ENCODE measurements at regions of chr21 and their contacts with region 1.

Region 1: DNA sequence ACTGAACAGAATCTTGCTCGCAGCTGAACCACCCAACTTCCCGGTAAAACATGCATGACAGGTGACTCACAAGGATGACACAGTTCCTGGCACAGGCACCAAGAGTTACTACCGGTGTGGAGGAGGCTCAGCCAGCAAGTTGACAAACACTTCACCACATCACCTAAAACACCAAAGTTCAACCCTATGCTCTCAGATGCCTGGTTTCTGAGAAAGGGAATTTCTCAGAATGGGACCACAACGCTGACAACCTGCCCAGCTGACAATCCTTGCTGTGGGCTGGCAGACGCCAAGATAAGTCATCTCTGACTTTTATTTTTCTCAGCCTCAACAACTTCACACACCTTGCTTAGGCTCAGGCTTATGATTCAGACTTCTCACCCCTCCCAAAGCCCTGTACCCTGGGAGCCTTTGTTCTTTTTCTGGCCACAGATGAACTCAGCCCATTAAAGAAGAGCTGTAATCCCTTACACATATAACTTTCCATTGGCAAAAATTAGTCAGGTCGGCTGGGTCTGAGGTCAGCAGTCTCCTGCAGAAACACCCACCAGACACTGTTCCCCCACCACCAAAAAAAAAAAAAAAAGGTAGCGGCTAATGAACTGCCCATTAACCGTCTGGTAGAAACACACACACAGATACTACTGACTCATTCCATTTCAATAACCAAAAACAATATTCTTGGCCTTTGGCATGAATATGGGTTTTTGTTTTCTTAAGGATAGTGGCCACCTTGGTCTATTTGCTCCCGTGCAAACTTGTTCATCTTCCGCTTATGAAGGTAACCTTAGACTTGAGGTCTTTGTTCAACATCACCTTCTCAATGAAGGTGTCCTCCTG is 10.8 kb upstream of the TIAM1 start:
- DNase-seq: peak; percentile 37 to 92 (median 72)
- ATAC-seq: peak; percentile 88
- H3K4me3 ChIP-seq: no peak overlapping the region
- H3K4me3 Mint-ChIP-seq: peak overlapping the region; percentile 21
- H3K27ac ChIP-seq: peak overlapping the region in 1 of 2 donors; percentile 54
- H3K27ac Mint-ChIP-seq: peak overlapping the region; percentile 72
- H3K4me1 ChIP-seq: peaks cover 37% of the 10 kb centered on the region
- H3K4me1 Mint-ChIP-seq: peaks cover 42% of the 10 kb centered on the region
- H3K27me3 ChIP-seq: no peaks in the 10 kb centered on the region
- H3K27me3 Mint-ChIP-seq: no peaks in the 10 kb centered on the region
- CTCF ChIP-seq: no peak

Region 2: GRCh38 chr21:31310750-31311149 is 44.1 kb before region 1 on chr21:
- CTCF ChIA-PET with region 1: no interaction called
- POLR2A ChIA-PET with region 1: no interaction called
- intact Hi-C with region 1: no loop called
- DNase-seq: no peak
- ATAC-seq: no peak
- H3K4me3 ChIP-seq: no peak overlapping the region
- H3K4me3 Mint-ChIP-seq: no peak overlapping the region
- H3K27ac ChIP-seq: no peak overlapping the region
- H3K27ac Mint-ChIP-seq: no peak overlapping the region
- H3K4me1 ChIP-seq: no peaks in the 10 kb centered on the region
- H3K4me1 Mint-ChIP-seq: no peaks in the 10 kb centered on the region
- H3K27me3 ChIP-seq: no peaks in the 10 kb centered on the region
- H3K27me3 Mint-ChIP-seq: no peaks in the 10 kb centered on the region
- CTCF ChIP-seq: no peak

Region 3: DNA sequence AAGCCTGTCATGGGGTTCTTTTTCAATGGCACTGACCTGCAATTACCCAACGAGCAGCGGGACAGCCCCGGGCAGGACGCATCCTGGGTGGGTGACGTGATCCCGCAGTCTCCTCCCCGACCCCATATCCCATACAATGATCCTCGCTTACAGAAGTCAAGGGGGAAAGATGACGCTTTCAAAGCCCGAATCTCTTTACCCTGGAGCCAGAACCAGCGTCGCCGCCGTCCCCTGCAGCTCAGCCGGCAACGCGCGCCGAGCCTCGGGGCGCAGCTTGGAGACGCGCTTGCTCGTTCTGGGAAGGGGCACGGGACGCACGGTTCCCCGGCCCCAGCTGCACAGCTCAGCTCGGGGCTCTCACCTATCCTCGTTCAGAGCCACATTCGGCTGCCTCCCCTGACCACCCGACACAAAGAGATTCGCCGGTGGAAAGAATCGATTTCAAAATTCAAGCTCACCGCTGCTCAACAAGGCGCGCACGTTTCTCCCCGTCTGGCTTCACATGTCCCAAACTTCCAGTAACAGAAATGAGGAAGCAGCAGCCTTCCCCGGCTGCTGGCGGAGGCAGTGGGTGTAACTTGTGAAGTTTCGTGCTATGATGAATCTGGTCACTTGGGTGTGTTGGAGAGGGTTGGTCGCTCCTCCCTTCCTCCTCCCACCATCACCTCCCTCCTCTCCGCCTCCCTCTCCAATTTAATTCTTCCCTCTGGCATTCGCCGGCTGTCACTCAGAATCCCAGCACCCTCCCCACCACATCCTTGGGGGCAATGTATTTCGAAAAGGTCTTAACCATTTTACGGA is 10.9 kb before region 1 on chr21 and contains the start of gene TIAM1:
- CTCF ChIA-PET with region 1: no interaction called
- POLR2A ChIA-PET with region 1: interaction called, 12 read pairs
- intact Hi-C with region 1: no loop called
- DNase-seq: peak in 4 of 14 experiments; percentile 20 to 62 (median 38)
- ATAC-seq: no peak
- H3K4me3 ChIP-seq: peak within 1 kb of the TSS; percentile 64
- H3K4me3 Mint-ChIP-seq: peak within 1 kb of the TSS; percentile 91
- H3K27ac ChIP-seq: no peak within 1 kb of the TSS
- H3K27ac Mint-ChIP-seq: no peak within 1 kb of the TSS
- H3K4me1 ChIP-seq: peaks cover 21% of the 10 kb centered on the region
- H3K4me1 Mint-ChIP-seq: peaks cover 44% of the 10 kb centered on the region
- H3K27me3 ChIP-seq: peaks cover 16 to 22% of the 10 kb centered on the region in 2 experiments
- H3K27me3 Mint-ChIP-seq: peaks cover 56% of the 10 kb centered on the region
- CTCF ChIP-seq: no peak
- total RNA-seq, gene TIAM1: 39.6 to 39.8 TPM

Region 4: GRCh38 chr21:31397515-31397926 is 42.7 kb after region 1 on chr21:
- CTCF ChIA-PET with region 1: no interaction called
- POLR2A ChIA-PET with region 1: interaction called, 3 read pairs
- intact Hi-C with region 1: loop called in 1 of 2 experiments (anchors 5 kb)
- DNase-seq: no peak
- ATAC-seq: peak; percentile 8
- H3K4me3 ChIP-seq: no peak overlapping the region
- H3K4me3 Mint-ChIP-seq: peak overlapping the region; percentile 70
- H3K27ac ChIP-seq: no peak overlapping the region
- H3K27ac Mint-ChIP-seq: peak overlapping the region; percentile 90
- H3K4me1 ChIP-seq: peaks cover 36% of the 10 kb centered on the region
- H3K4me1 Mint-ChIP-seq: peaks cover 58% of the 10 kb centered on the region
- H3K27me3 ChIP-seq: no peaks in the 10 kb centered on the region
- H3K27me3 Mint-ChIP-seq: no peaks in the 10 kb centered on the region
- CTCF ChIP-seq: no peak

Region 5: DNA sequence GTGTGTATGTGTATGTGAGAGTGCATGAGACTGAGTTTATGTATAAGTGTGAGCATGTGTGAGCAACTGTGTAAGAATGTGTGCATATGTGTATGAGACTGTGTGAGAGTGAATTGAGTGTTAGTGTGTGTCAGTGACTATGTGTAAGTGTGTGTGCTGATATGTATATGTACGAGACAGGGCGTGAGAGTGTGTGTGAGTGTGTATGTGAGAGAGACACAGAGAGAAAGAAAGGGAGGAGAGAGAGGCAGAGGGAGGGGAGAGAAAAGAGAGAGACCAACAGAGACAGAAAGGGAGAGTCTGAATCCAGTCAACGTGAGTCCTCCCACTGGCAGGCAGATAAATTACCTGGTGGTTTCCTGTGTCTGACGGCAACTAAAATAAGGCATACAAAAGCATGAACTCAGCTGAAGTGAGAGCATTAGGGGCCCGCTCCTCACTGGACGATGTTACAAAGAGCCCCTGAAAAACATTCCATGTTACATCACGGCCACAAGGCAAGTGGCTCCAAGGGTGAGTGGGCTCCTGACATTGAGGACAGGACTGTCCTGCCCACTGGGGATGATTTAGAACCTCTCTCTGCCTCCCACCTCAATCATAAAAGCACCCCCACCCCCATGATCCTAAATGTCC is 55.8 kb after region 1 on chr21:
- CTCF ChIA-PET with region 1: no interaction called
- POLR2A ChIA-PET with region 1: no interaction called
- intact Hi-C with region 1: no loop called
- DNase-seq: peak in 7 of 14 experiments; percentile 9 to 48 (median 39)
- ATAC-seq: peak; percentile 80
- H3K4me3 ChIP-seq: no peak overlapping the region
- H3K4me3 Mint-ChIP-seq: no peak overlapping the region
- H3K27ac ChIP-seq: no peak overlapping the region
- H3K27ac Mint-ChIP-seq: no peak overlapping the region
- H3K4me1 ChIP-seq: peaks cover 9% of the 10 kb centered on the region
- H3K4me1 Mint-ChIP-seq: peaks cover 13% of the 10 kb centered on the region
- H3K27me3 ChIP-seq: no peaks in the 10 kb centered on the region
- H3K27me3 Mint-ChIP-seq: no peaks in the 10 kb centered on the region
- CTCF ChIP-seq: no peak

Region 6: GRCh38 chr21:31509194-31510017 is 154.6 kb after region 1 on chr21:
- CTCF ChIA-PET with region 1: no interaction called
- POLR2A ChIA-PET with region 1: no interaction called
- intact Hi-C with region 1: loop called in 1 of 2 experiments (anchors 5 kb)
- DNase-seq: peak; percentile 45 to 85 (median 70)
- ATAC-seq: peak; percentile 82
- H3K4me3 ChIP-seq: no peak overlapping the region
- H3K4me3 Mint-ChIP-seq: peak overlapping the region; percentile 62
- H3K27ac ChIP-seq: no peak overlapping the region
- H3K27ac Mint-ChIP-seq: peak overlapping the region; percentile 29
- H3K4me1 ChIP-seq: peaks cover 24% of the 10 kb centered on the region
- H3K4me1 Mint-ChIP-seq: peaks cover 39% of the 10 kb centered on the region
- H3K27me3 ChIP-seq: no peaks in the 10 kb centered on the region
- H3K27me3 Mint-ChIP-seq: no peaks in the 10 kb centered on the region
- CTCF ChIP-seq: peak; percentile 53

Measured in CD4-positive, alpha-beta T cell (primary cell).